Posterior cingulate gyrus (tissue), 11 donors: ENCODE measurements at regions of chr1 and their contacts with region 1.

Region 1: DNA sequence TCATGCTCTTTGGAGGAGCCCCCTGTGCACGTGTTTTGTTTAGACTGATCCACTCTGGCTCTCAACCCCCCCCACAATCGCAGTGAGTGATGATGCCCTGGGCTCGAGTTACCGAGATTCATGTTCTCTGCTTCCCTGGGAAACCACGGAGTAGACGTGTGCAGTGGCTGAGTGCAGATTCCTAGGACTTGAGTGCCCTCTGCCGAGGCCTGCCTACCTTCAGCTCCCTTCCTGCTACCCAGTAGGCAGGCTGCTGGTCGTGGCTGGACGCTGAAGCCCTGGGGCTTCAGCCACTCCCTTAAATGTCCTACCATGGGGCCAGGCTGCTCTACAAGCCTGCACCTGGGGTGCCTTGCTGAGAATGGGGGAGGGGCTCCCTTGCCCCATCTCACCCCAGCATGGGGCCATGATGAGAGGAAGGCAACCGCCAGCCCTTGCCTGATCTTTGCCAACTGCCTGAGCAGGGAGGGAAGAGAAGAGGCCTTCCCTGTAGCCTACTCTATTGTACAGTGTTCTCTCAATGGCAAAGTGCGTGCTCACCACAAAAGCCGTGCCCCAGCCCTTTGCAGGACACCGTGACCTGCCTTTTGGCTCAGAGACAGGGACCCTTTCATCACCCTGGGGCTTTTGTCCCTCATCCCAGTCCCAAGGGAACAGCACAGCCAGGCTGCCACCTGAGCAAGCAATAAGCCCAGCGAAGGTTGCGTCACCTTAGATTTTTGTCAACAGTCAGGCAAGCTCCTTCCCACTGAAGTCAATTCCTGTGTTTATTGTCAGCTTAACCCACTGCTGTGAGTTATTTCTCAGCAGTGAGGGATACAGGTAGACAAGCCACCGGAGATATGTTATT is 4.1 kb upstream of the GRIK3 start:
- DNase-seq: peak; percentile 44 to 96 (median 76)

Region 2: DNA sequence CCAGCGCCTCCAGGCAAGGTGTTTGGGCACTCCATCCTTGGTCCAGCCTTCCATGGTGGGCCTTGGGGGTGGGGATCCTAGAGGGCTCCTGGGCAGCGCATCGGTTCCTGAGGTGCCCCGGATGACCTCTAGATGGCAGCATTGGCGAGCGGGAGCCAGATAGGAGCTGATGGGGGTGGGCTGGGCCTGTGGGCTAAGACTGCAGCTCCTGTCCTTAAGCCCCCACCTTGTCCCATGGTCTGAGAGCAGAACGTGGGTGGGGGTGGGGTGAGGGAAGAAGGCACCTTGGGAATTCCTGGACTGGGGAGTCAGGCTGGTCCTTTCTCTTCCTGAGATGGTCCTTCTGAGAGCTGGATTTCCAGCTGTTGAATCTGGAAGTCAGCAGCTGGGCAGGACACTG is 462.3 kb before region 1 on chr1:
- intact Hi-C with region 1: loop called (anchors 5 kb)
- DNase-seq: peak; percentile 18 to 94 (median 70)

Region 3: DNA sequence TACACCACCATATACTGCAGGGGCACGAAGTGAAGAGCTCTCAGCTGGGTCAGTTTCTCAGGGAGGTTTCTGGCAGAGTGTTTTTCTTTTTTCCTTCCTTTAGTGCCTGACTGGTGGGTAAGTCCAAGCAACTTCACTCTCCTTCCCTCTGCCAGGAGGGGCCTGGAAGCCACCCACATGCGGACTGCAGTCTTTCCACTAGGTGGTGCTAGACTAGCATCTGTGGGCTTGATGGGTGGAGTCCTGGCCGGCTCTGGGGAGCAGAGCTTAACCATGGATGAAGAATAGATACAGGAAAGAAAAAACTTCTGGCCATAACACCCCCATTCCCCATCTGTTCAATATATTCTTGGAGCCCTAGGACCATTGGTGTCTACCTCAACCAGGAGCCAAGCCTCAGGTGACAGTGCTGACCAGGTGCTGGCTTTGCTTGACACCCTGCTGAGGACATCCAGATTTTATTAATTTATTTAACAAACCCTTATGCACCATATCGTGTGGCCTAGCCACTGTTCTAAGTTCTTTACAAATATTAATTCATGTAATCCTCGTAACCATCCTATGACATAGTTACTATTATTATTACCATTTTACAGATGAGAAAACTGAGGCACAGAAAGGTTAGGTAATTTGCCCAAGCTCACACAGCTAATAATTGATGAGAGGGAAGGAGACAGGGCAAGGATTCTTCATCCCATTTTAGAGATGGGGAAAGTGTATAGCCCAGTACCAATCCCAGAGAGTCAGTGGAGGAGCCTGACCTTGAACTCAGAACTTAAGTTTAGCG is 429.0 kb before region 1 on chr1:
- intact Hi-C with region 1: loop called (anchors 2 kb)
- DNase-seq: peak; percentile 47 to 96 (median 78)

Region 4: GRCh38 chr1:36703526-36704208 is 334.8 kb before region 1 on chr1:
- intact Hi-C with region 1: loop called (anchors 1 kb)
- DNase-seq: peak; percentile 75 to 98 (median 88)